ENCODE measurements at regions of chr16 and their contacts with region 1.

Region 1: GRCh38 chr16:17578921-17579874 is 108.4 kb upstream of the XYLT1 start:
- DNase-seq: peak; percentile 36 to 55 (median 51)
- H3K4me3 ChIP-seq: no peak overlapping the region
- H3K4me3 Mint-ChIP-seq: no peak overlapping the region
- H3K27ac ChIP-seq: no peak overlapping the region
- H3K27ac Mint-ChIP-seq: no peak overlapping the region
- H3K4me1 ChIP-seq: peaks cover 3% of the 10 kb centered on the region
- H3K4me1 Mint-ChIP-seq: peaks cover 0 to 5% (median 1%) of the 10 kb centered on the region in 4 donors
- H3K27me3 ChIP-seq: no peaks in the 10 kb centered on the region
- H3K27me3 Mint-ChIP-seq: peaks cover 2 to 5% of the 10 kb centered on the region in 2 donors

Region 2: GRCh38 chr16:16861546-16861945 is 717.7 kb before region 1 on chr16:
- CTCF ChIA-PET with region 1: interaction called, 28 read pairs
- POLR2A ChIA-PET with region 1: no interaction called
- intact Hi-C with region 1: loop called (anchors 1 kb)
- DNase-seq: peak; percentile 41 to 50 (median 45)
- H3K4me3 ChIP-seq: no peak overlapping the region
- H3K4me3 Mint-ChIP-seq: no peak overlapping the region
- H3K27ac ChIP-seq: no peak overlapping the region
- H3K27ac Mint-ChIP-seq: no peak overlapping the region
- H3K4me1 ChIP-seq: no peaks in the 10 kb centered on the region
- H3K4me1 Mint-ChIP-seq: no peaks in the 10 kb centered on the region
- H3K27me3 ChIP-seq: no peaks in the 10 kb centered on the region
- H3K27me3 Mint-ChIP-seq: peaks cover 2 to 15% of the 10 kb centered on the region in 2 donors

Region 3: DNA sequence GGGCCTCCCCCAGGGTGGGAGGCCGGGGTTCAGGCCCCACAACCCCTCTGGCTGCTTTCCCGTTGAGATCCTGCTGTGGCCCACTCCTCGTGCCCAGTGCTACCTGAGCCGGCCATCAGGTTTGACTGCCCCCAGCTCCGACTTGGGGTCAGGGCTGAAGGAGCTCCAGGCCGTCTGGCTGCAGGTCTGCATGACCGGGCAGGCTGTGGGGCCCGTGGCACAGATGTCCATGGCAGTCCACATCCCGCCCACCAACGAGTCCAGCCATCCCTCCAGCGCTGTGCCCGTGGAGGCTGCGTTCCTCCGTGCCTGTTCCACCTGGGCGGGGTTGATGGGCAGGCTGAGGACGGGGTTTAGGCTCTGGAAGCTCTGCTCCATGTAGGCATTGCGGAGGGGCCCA is 470.6 kb before region 1 on chr16:
- CTCF ChIA-PET with region 1: no interaction called
- POLR2A ChIA-PET with region 1: no interaction called
- intact Hi-C with region 1: no loop called
- DNase-seq: no peak
- H3K4me3 ChIP-seq: no peak overlapping the region
- H3K4me3 Mint-ChIP-seq: no peak overlapping the region
- H3K27ac ChIP-seq: no peak overlapping the region
- H3K27ac Mint-ChIP-seq: no peak overlapping the region
- H3K4me1 ChIP-seq: peaks cover 10% of the 10 kb centered on the region
- H3K4me1 Mint-ChIP-seq: peaks cover 5 to 14% (median 9%) of the 10 kb centered on the region in 4 donors
- H3K27me3 ChIP-seq: no peaks in the 10 kb centered on the region
- H3K27me3 Mint-ChIP-seq: no peaks in the 10 kb centered on the region

Region 4: DNA sequence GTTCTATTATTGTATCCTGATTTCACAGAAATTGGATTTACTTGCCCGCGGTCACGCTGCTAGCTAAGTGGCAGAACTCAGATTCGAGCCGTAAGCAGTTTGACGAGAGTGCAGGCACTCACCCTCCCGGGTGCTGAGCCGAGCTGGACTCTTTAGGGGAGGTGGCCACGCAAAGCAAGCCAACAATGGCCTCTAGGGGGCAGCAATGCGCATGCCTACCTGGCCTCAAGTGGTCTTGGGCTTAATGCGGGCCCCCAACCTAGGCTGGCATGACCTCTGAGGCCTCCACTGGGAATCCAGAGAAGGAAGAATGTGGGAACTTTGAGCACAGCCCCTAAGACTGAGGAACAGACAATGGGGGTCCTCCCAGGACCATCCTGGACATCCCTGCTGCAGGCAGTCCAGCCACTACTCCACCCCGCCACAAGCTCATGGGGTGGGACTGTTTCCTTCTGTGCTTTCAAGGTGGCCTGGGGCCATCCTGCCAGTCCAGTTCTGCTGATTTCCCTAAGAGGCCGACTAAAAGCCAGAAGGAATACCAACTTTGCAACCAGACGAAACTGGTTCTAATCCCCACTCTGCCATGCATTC is 384.9 kb before region 1 on chr16:
- CTCF ChIA-PET with region 1: interaction called, 21 read pairs
- POLR2A ChIA-PET with region 1: no interaction called
- intact Hi-C with region 1: loop called (anchors 1 kb)
- DNase-seq: peak; percentile 26 to 52 (median 44)
- H3K4me3 ChIP-seq: no peak overlapping the region
- H3K4me3 Mint-ChIP-seq: no peak overlapping the region
- H3K27ac ChIP-seq: no peak overlapping the region
- H3K27ac Mint-ChIP-seq: no peak overlapping the region
- H3K4me1 ChIP-seq: no peaks in the 10 kb centered on the region
- H3K4me1 Mint-ChIP-seq: peaks cover 0 to 5% (median 0%) of the 10 kb centered on the region in 4 donors
- H3K27me3 ChIP-seq: no peaks in the 10 kb centered on the region
- H3K27me3 Mint-ChIP-seq: no peaks in the 10 kb centered on the region

Region 5: GRCh38 chr16:17211797-17212196 is 367.4 kb before region 1 on chr16:
- CTCF ChIA-PET with region 1: interaction called, 6 read pairs
- POLR2A ChIA-PET with region 1: no interaction called
- intact Hi-C with region 1: loop called (anchors 1 kb)
- DNase-seq: peak in 4 of 5 donors; percentile 15 to 30 (median 17)
- H3K4me3 ChIP-seq: no peak overlapping the region
- H3K4me3 Mint-ChIP-seq: no peak overlapping the region
- H3K27ac ChIP-seq: no peak overlapping the region
- H3K27ac Mint-ChIP-seq: peak overlapping the region in 1 of 7 donors; percentile 35
- H3K4me1 ChIP-seq: peaks cover 7% of the 10 kb centered on the region
- H3K4me1 Mint-ChIP-seq: peaks cover 4 to 26% (median 11%) of the 10 kb centered on the region in 4 donors
- H3K27me3 ChIP-seq: no peaks in the 10 kb centered on the region
- H3K27me3 Mint-ChIP-seq: no peaks in the 10 kb centered on the region

Region 6: GRCh38 chr16:17556276-17557052 is 22.7 kb before region 1 on chr16:
- CTCF ChIA-PET with region 1: interaction called, 11 read pairs
- POLR2A ChIA-PET with region 1: no interaction called
- intact Hi-C with region 1: no loop called
- DNase-seq: no peak
- H3K4me3 ChIP-seq: no peak overlapping the region
- H3K4me3 Mint-ChIP-seq: no peak overlapping the region
- H3K27ac ChIP-seq: no peak overlapping the region
- H3K27ac Mint-ChIP-seq: no peak overlapping the region
- H3K4me1 ChIP-seq: no peaks in the 10 kb centered on the region
- H3K4me1 Mint-ChIP-seq: peaks cover 0 to 4% (median 1%) of the 10 kb centered on the region in 4 donors
- H3K27me3 ChIP-seq: no peaks in the 10 kb centered on the region
- H3K27me3 Mint-ChIP-seq: peaks cover 9 to 23% of the 10 kb centered on the region in 2 donors

Measured in CD4-positive, alpha-beta memory T cell (primary cell).